Gastrocnemius medialis (tissue), 4 donors: ENCODE measurements at regions of chr11 and their contacts with region 1.

Region 1: DNA sequence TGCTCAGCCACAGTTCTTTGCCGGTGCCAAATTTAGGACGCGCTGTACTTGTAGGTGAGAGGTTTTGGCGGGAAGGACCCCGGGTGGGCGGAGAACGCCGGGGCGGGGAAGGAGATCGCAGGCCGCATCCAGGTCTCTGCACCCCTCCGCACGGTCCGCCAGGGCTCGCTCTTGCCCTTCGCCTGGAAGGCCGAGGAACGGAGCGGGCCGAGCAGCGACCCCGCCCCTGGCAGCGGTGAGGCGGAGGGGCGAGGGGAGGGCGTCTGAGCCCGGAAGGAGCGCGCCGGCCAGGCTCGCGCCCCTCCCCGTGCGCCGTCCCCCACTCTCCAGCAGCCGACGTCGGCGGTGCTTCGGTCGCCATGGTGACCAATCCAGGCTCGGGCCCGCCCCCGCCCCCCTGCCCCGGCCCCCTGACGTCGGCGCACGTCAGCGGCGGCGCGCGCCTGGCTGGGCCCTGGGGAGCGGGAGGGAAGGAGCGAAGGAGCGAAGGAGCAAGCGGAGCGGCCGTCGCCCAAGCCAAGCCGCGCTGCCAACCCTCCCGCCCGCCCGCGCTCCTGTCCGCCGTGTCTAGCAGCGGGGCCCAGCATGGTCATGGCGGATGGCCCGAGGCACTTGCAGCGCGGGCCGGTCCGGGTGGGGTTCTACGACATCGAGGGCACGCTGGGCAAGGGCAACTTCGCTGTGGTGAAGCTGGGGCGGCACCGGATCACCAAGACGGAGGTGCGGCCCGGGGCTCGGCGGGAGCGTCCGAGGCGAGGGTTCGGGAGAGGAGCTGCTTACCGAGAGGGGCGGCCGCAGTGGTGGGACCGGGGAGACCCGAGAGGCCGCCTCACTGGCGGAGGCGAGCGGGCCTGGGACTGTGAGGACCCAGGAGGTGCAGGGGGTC is at the start of gene SIK2:
- DNase-seq: peak; percentile 80 to 90
- ATAC-seq: peak; percentile 81 to 82
- H3K4me3 ChIP-seq: peak within 1 kb of the TSS; percentile 72 to 94 (median 88)
- H3K27ac ChIP-seq: peak within 1 kb of the TSS; percentile 90 to 98 (median 97)
- H3K4me1 ChIP-seq: peaks cover 40 to 41% of the 10 kb centered on the region in 2 donors
- H3K27me3 ChIP-seq: no peaks in the 10 kb centered on the region
- CTCF ChIP-seq: peak; percentile 94 to 99 (median 95)
- POLR2A ChIP-seq: peak; percentile 55 to 72
- total RNA-seq, gene SIK2: 16.5 to 98.7 (median 43.8) TPM

Region 2: GRCh38 chr11:111367411-111368284 is 234.6 kb before region 1 on chr11:
- in situ Hi-C with region 1: no loop called
- intact Hi-C with region 1: no loop called
- DNase-seq: no peak
- ATAC-seq: no peak
- H3K4me3 ChIP-seq: no peak overlapping the region
- H3K27ac ChIP-seq: no peak overlapping the region
- H3K4me1 ChIP-seq: no peaks in the 10 kb centered on the region
- H3K27me3 ChIP-seq: no peaks in the 10 kb centered on the region
- CTCF ChIP-seq: no peak
- POLR2A ChIP-seq: no peak

Region 3: DNA sequence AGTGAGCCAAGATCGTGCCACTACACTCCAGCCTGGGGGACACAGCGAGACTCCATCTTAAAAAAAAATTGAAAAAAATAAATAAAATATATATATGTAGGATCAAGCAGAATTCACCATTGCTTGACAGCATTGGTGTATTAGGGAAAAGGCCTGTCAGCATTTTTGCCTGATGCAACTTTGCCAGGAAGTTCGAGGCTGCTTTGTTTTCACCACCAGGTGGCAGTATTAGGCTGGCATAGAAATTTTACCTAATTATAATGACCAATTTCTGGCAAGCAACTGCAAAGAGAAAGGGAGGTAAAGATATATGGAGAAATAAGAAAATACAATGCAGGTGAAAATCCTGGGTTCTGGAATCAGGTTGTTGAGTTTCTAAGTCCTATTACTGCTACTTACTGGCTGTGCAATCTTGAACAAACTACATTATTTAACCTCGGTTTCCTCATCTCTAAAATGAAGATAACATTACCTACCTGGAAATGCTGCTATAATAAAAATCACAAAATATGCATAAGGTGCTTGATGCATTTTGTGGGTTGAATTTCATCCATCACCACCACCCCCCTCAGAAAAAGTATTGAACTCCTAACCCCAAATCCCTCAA is 37.0 kb before region 1 on chr11:
- in situ Hi-C with region 1: no loop called
- intact Hi-C with region 1: loop called (anchors 2 kb)
- DNase-seq: peak; percentile 37 to 56
- ATAC-seq: peak; percentile 54 to 86
- H3K4me3 ChIP-seq: no peak overlapping the region
- H3K27ac ChIP-seq: no peak overlapping the region
- H3K4me1 ChIP-seq: peaks cover 0 to 3% of the 10 kb centered on the region in 2 donors
- H3K27me3 ChIP-seq: no peaks in the 10 kb centered on the region
- CTCF ChIP-seq: peak; percentile 78 to 92 (median 86)
- POLR2A ChIP-seq: no peak

Region 4: DNA sequence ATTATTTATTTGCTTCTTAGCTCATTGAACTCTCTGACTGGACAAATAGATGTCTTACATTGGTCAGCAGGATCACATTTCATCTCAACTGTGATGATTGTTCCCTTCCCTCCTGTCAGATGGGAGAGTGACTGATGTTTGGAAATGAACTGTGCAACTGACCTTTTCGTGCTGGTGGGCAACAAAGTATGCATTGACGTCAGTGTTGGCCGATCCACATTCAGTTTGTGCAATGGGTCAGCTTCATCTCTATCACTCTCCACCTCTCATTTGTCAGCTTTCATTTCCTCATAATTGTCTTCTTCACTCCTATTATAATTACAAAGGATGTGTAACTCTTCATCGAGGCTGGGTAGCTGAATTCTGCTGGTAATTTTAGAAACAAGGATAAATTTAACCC is 92.6 kb after region 1 on chr11:
- in situ Hi-C with region 1: no loop called
- intact Hi-C with region 1: loop called (anchors 5 kb)
- DNase-seq: peak in 1 of 2 donors; percentile 40
- ATAC-seq: peak; percentile 68 to 84
- H3K4me3 ChIP-seq: peak overlapping the region in 1 of 4 donors; percentile 0
- H3K27ac ChIP-seq: peak overlapping the region; percentile 65 to 81 (median 68)
- H3K4me1 ChIP-seq: peaks cover 33 to 56% of the 10 kb centered on the region in 2 donors
- H3K27me3 ChIP-seq: no peaks in the 10 kb centered on the region
- CTCF ChIP-seq: no peak
- POLR2A ChIP-seq: no peak

Region 5: GRCh38 chr11:111735262-111736116 is 133.3 kb after region 1 on chr11:
- in situ Hi-C with region 1: no loop called
- intact Hi-C with region 1: loop called (anchors 2 kb)
- DNase-seq: peak; percentile 66 to 75
- ATAC-seq: peak; percentile 34 to 59
- H3K4me3 ChIP-seq: peak overlapping the region; percentile 42 to 58 (median 54)
- H3K27ac ChIP-seq: peak overlapping the region; percentile 85 to 97 (median 96)
- H3K4me1 ChIP-seq: peaks cover 81 to 82% of the 10 kb centered on the region in 2 donors
- H3K27me3 ChIP-seq: no peaks in the 10 kb centered on the region
- CTCF ChIP-seq: no peak
- POLR2A ChIP-seq: peak; percentile 65 to 79

Region 6: GRCh38 chr11:111777094-111778046 is 175.1 kb after region 1 on chr11:
- in situ Hi-C with region 1: loop called (anchors 5 kb)
- intact Hi-C with region 1: loop called (anchors 1 kb)
- DNase-seq: no peak
- ATAC-seq: peak; percentile 90 to 94
- H3K4me3 ChIP-seq: no peak overlapping the region
- H3K27ac ChIP-seq: peak overlapping the region in 1 of 4 donors; percentile 6
- H3K4me1 ChIP-seq: peaks cover 0 to 7% of the 10 kb centered on the region in 2 donors
- H3K27me3 ChIP-seq: no peaks in the 10 kb centered on the region
- CTCF ChIP-seq: peak; percentile 70 to 81 (median 78)
- POLR2A ChIP-seq: no peak